ENCODE measurements at regions of chr15 and their contacts with region 1.

Region 1: GRCh38 chr15:82540055-82540983 is at the start of gene RPS17:
- DNase-seq: peak; percentile 100
- ATAC-seq: peak; percentile 95
- H3K4me3 Mint-ChIP-seq: peak within 1 kb of the TSS; percentile 98
- H3K27ac Mint-ChIP-seq: peak within 1 kb of the TSS; percentile 97
- H3K4me1 Mint-ChIP-seq: peaks cover 34% of the 10 kb centered on the region
- H3K27me3 Mint-ChIP-seq: peaks cover 3% of the 10 kb centered on the region
- CTCF ChIP-seq: peak; percentile 88
- total RNA-seq, gene RPS17: 3,227 and 3,822 TPM in 2 replicates

Region 2: GRCh38 chr15:82680200-82681102 is 140.1 kb after region 1 on chr15:
- CTCF ChIA-PET with region 1: no interaction called
- POLR2A ChIA-PET with region 1: interaction called, 7 read pairs
- intact Hi-C with region 1: loop called (anchors 1 kb)
- DNase-seq: peak; percentile 59
- ATAC-seq: peak; percentile 93
- H3K4me3 Mint-ChIP-seq: peak overlapping the region; percentile 87
- H3K27ac Mint-ChIP-seq: peak overlapping the region; percentile 82
- H3K4me1 Mint-ChIP-seq: peaks cover 12% of the 10 kb centered on the region
- H3K27me3 Mint-ChIP-seq: peaks cover 11% of the 10 kb centered on the region
- CTCF ChIP-seq: no peak

Region 3: DNA sequence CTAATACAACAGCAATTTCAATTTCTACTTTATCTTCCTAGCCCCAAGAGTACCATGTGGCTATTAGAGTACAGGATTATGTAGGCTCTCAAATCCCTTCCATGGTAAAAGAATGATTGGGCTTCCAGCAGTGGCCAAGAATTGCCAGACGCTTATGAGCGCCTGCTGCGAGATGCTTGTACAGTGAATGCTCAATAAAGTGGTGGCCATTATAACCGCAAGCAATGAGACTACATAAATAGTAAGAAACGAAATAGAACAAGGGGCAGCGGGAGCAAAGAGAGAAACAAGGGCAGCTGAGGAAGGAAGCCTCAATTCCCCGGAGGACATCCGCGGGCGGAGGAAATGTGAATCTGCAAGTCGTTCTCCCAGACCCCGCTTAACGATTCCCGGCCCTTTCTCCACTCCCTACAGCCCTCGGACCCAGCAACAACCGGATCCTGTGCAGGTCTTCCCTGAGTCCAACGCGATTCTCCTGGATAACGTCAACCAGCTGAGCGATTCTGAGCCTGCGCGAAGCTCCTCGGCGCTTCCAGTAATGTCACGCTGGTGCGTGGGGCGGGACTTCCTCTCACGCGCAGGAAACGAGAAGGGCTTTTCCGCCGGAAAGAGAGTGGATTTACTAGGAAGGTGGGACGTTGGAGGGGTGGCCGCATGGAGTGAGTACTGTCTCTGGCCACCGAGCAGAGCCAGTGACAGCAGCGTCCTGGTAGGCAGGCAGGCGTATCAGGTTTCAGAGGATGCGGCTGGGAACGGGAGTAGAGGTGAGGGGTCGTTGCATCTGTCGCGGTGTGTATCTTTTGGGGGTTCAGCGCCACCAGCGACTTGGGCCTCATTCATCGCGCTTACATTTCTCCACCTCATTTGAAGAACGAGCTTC is 209.9 kb after region 1 on chr15:
- CTCF ChIA-PET with region 1: interaction called, 3 read pairs
- POLR2A ChIA-PET with region 1: interaction called, 42 read pairs
- intact Hi-C with region 1: loop called (anchors 1 kb)
- DNase-seq: peak; percentile 76
- ATAC-seq: peak; percentile 95
- H3K4me3 Mint-ChIP-seq: peak overlapping the region; percentile 100
- H3K27ac Mint-ChIP-seq: peak overlapping the region; percentile 94
- H3K4me1 Mint-ChIP-seq: peaks cover 44% of the 10 kb centered on the region
- H3K27me3 Mint-ChIP-seq: no peaks in the 10 kb centered on the region
- CTCF ChIP-seq: no peak

Region 4: GRCh38 chr15:82832601-82833361 is 292.5 kb after region 1 on chr15:
- CTCF ChIA-PET with region 1: no interaction called
- POLR2A ChIA-PET with region 1: interaction called, 11 read pairs
- intact Hi-C with region 1: loop called (anchors 1 kb)
- DNase-seq: no peak
- ATAC-seq: peak; percentile 79
- H3K4me3 Mint-ChIP-seq: peak overlapping the region; percentile 51
- H3K27ac Mint-ChIP-seq: peak overlapping the region; percentile 86
- H3K4me1 Mint-ChIP-seq: peaks cover 20% of the 10 kb centered on the region
- H3K27me3 Mint-ChIP-seq: no peaks in the 10 kb centered on the region
- CTCF ChIP-seq: no peak

Region 5: DNA sequence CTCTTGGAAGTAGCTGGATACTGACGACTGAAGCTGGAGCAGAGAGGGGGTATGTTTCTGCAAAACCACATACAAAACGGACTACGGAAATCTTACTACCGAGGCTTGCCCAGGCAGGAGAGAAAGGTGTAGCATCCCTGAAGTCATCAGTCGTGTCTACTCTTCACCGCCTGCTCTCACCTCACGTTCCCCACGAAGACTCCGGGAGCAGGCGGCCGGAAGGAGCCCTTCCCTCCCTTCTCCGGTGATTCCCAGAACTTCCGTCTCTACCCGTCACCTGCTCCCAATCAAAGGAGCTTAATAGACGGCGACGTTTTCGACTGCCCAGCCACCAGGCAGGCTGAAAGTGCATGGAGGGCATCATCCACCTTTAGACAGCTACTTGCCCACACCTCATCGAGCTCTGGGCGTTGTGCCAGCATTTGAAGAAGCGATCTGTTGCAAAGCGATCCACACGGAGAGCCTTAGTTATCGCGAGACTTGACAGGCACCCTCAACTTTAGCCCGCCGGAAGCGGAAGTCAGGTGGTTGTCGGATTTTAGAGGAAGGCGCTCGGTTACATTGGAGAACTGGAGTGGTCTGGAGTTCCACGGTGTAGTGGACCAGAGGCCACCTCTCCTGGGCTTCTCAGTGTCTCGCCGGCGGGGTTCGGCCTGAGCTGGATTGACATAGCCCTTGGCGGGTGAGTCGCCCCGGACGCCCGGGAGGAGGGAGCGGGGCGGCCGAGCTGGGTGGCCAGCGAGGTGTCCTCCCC is 445.5 kb after region 1 on chr15 and contains the start of gene RAMAC:
- CTCF ChIA-PET with region 1: no interaction called
- POLR2A ChIA-PET with region 1: interaction called, 32 read pairs
- intact Hi-C with region 1: loop called (anchors 1 kb)
- DNase-seq: peak; percentile 79
- ATAC-seq: peak; percentile 95
- H3K4me3 Mint-ChIP-seq: peak within 1 kb of the TSS; percentile 99
- H3K27ac Mint-ChIP-seq: peak within 1 kb of the TSS; percentile 92
- H3K4me1 Mint-ChIP-seq: peaks cover 23% of the 10 kb centered on the region
- H3K27me3 Mint-ChIP-seq: no peaks in the 10 kb centered on the region
- CTCF ChIP-seq: no peak
- total RNA-seq, gene RAMAC: 23.4 and 24.7 TPM in 2 replicates

Region 6: DNA sequence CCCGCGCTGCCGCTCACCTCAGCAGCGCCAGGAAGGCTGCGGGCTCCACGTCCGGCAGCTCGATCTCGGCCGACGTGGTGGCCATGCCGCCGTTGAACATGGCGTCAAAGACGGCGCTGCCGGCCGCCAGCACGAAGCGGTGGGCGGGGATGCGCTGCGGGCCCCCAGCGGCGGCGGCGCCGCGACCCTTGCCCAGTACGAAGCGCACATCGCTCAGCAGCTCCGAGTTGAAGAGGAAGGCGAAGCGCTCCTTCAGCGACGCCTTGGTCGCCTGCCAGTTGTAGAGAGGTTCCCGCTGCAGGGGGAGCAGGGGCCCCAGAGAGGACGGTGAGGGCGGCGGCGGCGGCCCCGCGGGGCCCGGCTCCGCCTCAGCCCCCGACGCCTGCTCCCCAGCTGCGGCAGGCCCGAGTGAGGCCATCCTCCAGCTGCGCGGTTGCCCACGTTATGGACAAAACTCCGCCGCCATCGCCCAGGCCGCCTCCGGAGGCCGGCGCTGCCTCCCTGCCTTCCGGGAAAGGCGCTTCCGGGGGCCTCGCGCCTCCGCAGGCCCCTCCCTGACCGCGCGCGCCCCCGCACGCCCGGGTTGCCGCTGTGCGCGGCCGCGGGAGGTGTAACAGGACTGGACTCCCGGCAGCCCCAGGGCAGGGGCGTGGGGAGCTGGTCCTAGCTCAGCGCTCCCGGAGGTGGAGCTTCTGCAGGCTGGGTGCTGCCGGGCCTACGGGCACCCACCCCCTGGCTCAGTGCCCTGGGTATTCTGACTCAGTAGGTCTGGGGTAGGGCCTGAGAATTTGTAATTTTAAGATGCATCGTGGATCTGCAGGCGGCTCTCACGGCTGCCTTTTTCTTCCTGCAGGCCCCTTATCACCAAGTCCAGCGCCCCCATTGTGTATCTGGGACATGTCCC is 526.7 kb after region 1 on chr15 and contains the start of gene BTBD1:
- CTCF ChIA-PET with region 1: interaction called, 4 read pairs
- POLR2A ChIA-PET with region 1: interaction called, 18 read pairs
- intact Hi-C with region 1: loop called (anchors 5 kb)
- DNase-seq: peak; percentile 86
- ATAC-seq: peak; percentile 92
- H3K4me3 Mint-ChIP-seq: peak within 1 kb of the TSS; percentile 87
- H3K27ac Mint-ChIP-seq: peak within 1 kb of the TSS; percentile 73
- H3K4me1 Mint-ChIP-seq: peaks cover 9% of the 10 kb centered on the region
- H3K27me3 Mint-ChIP-seq: no peaks in the 10 kb centered on the region
- CTCF ChIP-seq: no peak
- total RNA-seq, gene BTBD1: 47.9 and 54.2 TPM in 2 replicates